Naive thymus-derived CD4-positive, alpha-beta T cell (primary cell): ENCODE measurements at regions of chr7 and their contacts with region 1.

Region 1: DNA sequence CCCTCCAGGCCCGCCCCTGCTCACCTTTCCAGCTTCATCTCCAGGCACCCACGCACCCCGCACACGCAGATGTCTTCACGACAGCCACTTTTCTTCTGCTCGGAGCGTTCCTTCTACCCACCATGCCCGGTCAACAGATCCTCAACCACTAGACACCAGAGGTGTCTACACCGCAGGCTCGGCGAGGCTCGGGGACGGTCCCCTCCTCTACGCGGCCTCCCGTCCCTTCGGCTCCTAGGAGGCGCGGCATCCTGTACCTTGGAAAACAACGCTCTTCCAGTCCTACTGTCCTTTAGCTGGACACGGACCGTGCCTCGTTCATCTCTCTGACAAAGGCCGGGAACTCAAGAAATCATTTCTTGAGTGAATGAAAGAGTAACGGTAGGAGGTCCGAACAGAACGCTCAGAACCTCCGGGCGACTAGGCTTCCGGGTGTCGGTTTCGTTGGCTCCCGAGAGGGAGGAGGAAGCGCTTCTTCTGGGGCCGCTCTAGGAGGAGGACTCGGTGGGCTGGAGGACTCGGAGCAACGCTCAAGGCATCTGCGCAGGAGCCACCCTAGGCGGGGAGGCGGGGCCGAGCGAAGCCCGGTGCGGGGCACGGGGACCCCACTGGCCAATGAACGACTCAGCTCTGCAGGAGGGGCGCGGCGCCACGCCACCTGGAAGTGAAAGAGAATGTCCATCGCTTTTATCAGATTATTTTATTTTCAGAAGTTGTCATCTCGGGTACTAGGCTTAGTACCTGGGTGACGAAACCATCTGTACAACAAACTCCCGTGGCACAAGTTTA is 7.2 kb upstream of the FIS1 start:
- DNase-seq: peak; percentile 95 to 98 (median 97)
- ATAC-seq: peak; percentile 100
- H3K4me3 ChIP-seq: peak overlapping the region; percentile 76
- H3K4me3 Mint-ChIP-seq: peak overlapping the region; percentile 94 to 100 (median 99)
- H3K27ac ChIP-seq: peak overlapping the region; percentile 87
- H3K27ac Mint-ChIP-seq: peak overlapping the region; percentile 90 to 99 (median 97)
- H3K4me1 ChIP-seq: peaks cover 13 to 16% of the 10 kb centered on the region in 2 donors
- H3K4me1 Mint-ChIP-seq: peaks cover 28 to 39% (median 32%) of the 10 kb centered on the region in 7 donors
- H3K27me3 ChIP-seq: no peaks in the 10 kb centered on the region
- H3K27me3 Mint-ChIP-seq: peaks cover 0 to 4% (median 0%) of the 10 kb centered on the region in 5 donors

Region 2: DNA sequence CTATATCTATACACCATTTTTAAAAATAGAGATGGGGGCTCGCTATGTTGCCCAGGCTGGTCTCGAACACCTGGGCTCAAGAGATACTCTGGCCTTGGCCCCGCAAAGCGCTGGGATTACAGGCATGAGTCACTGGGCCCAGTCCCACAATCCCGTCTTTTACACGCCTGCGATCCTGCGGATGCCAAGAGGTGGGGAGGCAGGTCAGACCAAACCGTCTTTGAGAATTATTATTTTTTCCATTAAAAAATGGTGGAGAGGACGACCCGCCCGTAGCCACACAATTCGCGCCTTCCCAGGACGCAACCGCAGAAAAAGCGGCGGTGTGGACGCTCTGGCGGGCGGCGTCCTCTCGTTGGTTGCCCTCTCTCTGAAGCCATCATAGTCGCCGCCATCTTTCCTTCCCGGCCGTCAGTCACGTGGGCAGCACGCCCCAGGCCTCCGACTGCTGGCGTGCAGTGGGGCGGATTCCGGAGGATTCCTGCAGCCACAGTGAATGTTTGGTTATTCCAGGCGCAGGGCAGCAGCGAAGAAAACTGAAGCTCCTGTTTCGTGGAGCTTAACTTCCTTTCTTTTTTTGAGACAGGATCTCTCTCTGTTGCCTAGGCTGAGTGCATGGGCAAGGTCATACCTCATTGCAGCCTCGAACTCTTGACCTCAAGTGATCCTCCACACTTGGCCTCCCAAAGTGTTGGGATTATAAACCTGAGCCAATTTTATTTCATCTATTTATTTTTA is 414.8 kb before region 1 on chr7:
- CTCF ChIA-PET with region 1: no interaction called
- POLR2A ChIA-PET with region 1: no interaction called
- intact Hi-C with region 1: loop called in 1 of 2 experiments (anchors 5 kb)
- DNase-seq: peak; percentile 42 to 65 (median 59)
- ATAC-seq: peak; percentile 97
- H3K4me3 ChIP-seq: peak overlapping the region; percentile 57
- H3K4me3 Mint-ChIP-seq: peak overlapping the region; percentile 80 to 90 (median 86)
- H3K27ac ChIP-seq: peak overlapping the region; percentile 59
- H3K27ac Mint-ChIP-seq: peak overlapping the region; percentile 64 to 92 (median 77)
- H3K4me1 ChIP-seq: no peaks in the 10 kb centered on the region
- H3K4me1 Mint-ChIP-seq: peaks cover 5 to 19% (median 16%) of the 10 kb centered on the region in 7 donors
- H3K27me3 ChIP-seq: no peaks in the 10 kb centered on the region
- H3K27me3 Mint-ChIP-seq: no peaks in the 10 kb centered on the region

Region 3: DNA sequence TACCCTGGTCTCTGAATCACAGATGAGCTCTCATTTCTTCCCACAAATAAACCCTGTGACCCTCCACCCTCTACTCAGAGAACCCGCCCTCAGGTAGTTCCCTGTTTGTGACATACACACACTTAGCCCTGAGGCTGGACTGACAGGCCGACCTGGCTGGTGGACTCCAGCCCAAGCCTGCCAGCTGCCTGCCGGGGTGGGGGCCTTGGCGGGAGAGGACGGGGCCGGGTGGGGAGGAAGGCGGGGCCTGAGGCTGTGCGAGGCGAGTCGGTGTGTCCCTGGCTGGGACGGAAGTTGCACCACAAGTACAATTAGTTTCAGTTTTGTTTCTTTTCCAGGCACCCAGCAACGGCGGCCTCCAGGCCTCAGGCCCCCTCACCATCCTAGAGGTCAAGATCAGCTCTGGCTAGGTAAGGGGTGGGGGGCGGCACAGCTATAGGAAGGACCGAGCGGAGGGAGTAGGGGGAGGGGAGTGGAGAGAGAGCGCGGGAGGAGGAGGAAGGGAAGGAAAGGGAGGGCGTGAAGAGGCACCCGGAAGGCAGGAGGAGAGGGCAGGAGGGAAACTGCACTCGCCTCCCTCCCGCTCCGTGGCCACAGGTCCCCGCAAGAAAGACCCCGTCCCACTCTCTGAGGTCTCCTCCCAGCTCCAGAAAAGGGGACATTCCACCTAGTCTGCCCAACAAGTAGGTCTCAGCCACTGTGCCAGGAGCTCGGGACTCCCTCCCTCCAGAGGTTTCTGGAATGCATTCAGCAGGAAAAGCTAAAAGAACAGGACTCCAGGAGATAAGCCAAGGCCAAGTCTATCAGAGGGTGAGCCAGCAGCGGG is 166.7 kb before region 1 on chr7 and contains the start of gene TRIM56:
- CTCF ChIA-PET with region 1: no interaction called
- POLR2A ChIA-PET with region 1: interaction called, 3 read pairs
- intact Hi-C with region 1: loop called in 1 of 2 experiments (anchors 1 kb)
- DNase-seq: peak; percentile 53 to 77 (median 74)
- ATAC-seq: peak; percentile 94
- H3K4me3 ChIP-seq: peak within 1 kb of the TSS; percentile 100
- H3K4me3 Mint-ChIP-seq: peak within 1 kb of the TSS; percentile 91 to 100 (median 98)
- H3K27ac ChIP-seq: peak within 1 kb of the TSS; percentile 97
- H3K27ac Mint-ChIP-seq: peak within 1 kb of the TSS; percentile 93 to 100 (median 99)
- H3K4me1 ChIP-seq: peaks cover 10 to 15% of the 10 kb centered on the region in 2 donors
- H3K4me1 Mint-ChIP-seq: peaks cover 14 to 43% (median 28%) of the 10 kb centered on the region in 7 donors
- H3K27me3 ChIP-seq: no peaks in the 10 kb centered on the region
- H3K27me3 Mint-ChIP-seq: peaks cover 0 to 6% (median 0%) of the 10 kb centered on the region in 5 donors
- total RNA-seq, gene TRIM56: 49.6 to 72.3 (median 68.0) TPM

Region 4: DNA sequence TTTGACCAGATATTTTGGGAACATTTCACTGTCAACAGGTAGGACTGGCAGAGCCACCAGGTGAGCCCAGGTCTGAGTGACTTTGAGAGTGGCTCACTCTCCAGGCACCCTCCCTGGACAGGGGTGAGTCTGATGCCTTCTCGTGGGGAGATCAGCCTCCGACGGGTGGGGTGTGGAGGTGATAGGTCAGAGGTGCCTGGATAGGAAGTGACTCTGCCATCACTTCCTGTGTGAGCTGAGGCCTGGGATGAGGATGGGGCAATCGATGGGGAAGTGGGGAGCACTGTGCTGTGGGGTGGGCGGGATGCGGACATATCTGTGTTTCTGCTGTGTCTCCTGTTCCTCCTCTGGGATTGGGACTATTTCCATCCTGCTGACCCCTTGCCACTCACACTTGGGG is 35.0 kb after region 1 on chr7:
- CTCF ChIA-PET with region 1: interaction called, 4 read pairs
- POLR2A ChIA-PET with region 1: no interaction called
- intact Hi-C with region 1: loop called (anchors 1 kb)
- DNase-seq: no peak
- ATAC-seq: no peak
- H3K4me3 ChIP-seq: no peak overlapping the region
- H3K4me3 Mint-ChIP-seq: no peak overlapping the region
- H3K27ac ChIP-seq: no peak overlapping the region
- H3K27ac Mint-ChIP-seq: no peak overlapping the region
- H3K4me1 ChIP-seq: no peaks in the 10 kb centered on the region
- H3K4me1 Mint-ChIP-seq: peaks cover 3 to 17% (median 5%) of the 10 kb centered on the region in 7 donors
- H3K27me3 ChIP-seq: no peaks in the 10 kb centered on the region
- H3K27me3 Mint-ChIP-seq: peaks cover 6 to 21% (median 9%) of the 10 kb centered on the region in 5 donors

Region 5: DNA sequence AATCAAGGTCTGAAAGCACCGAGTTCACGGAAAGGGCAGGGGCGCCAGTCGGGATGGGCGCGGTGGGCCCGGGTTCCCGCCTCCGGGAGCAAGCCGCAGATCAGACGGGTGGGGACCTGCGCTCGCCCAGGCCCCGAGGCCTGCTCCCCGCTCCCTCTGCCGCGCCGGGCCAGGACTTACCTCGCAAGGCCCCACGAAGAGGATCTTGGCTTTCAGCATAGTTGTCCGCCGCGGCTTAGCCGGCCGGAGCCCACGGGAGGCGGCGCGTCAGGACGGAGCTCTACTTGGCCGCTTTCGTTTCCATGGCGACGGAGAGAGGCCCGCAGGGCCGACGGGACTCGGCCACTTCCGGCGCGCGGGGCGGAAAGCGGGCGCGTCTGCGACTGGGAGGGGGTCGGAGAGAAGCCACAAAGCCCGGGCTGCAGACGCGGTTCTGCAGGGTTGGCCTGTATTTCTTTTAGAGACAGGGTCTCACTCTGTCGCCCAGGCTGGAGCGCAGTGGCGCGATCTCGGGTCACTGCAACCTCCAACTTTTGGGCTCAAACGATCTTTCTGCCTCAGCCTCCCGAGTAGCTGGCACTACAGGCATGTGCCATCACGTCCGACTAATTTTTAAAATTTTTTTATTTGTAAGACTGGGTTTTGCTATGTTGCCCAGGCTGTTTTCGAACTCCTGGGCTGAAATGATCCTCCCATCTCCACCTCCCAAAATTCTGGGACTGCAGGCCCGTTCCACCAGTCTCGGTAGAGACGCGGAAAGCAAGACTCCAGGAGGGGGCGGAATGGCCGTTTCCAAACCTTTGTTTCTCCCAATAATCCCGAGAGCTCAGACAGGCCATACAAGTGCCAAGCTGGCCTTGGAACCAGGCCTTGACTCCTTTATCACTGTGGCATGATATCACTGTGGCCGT is 69.7 kb after region 1 on chr7 and contains the start of gene IFT22:
- CTCF ChIA-PET with region 1: no interaction called
- POLR2A ChIA-PET with region 1: no interaction called
- intact Hi-C with region 1: loop called (anchors 1 to 2 kb)
- DNase-seq: peak; percentile 68 to 87 (median 79)
- ATAC-seq: peak; percentile 95
- H3K4me3 ChIP-seq: peak within 1 kb of the TSS; percentile 74
- H3K4me3 Mint-ChIP-seq: peak within 1 kb of the TSS; percentile 86 to 94 (median 91)
- H3K27ac ChIP-seq: peak within 1 kb of the TSS; percentile 70
- H3K27ac Mint-ChIP-seq: peak within 1 kb of the TSS; percentile 82 to 94 (median 90)
- H3K4me1 ChIP-seq: peaks cover 7 to 12% of the 10 kb centered on the region in 2 donors
- H3K4me1 Mint-ChIP-seq: peaks cover 0 to 19% (median 9%) of the 10 kb centered on the region in 7 donors
- H3K27me3 ChIP-seq: no peaks in the 10 kb centered on the region
- H3K27me3 Mint-ChIP-seq: peaks cover 0 to 7% (median 0%) of the 10 kb centered on the region in 5 donors
- total RNA-seq, gene IFT22: 3.7 to 7.4 (median 4.8) TPM